ENCODE measurements at regions of chr1 and their contacts with region 1.

Region 1: GRCh38 chr1:150629115-150629928 is at the start of gene ENSA:
- DNase-seq: peak; percentile 99
- H3K4me3 ChIP-seq: peak within 1 kb of the TSS; percentile 22 to 56 (median 44)
- H3K27ac ChIP-seq: peak within 1 kb of the TSS; percentile 93 to 99 (median 95)
- H3K4me1 ChIP-seq: peaks cover 9 to 16% of the 10 kb centered on the region in 2 donors
- H3K27me3 ChIP-seq: no peaks in the 10 kb centered on the region
- CTCF ChIP-seq: no peak
- POLR2A ChIP-seq: peak; percentile 74 to 97
- total RNA-seq, gene ENSA: 183 to 292 (median 218) TPM

Region 2: DNA sequence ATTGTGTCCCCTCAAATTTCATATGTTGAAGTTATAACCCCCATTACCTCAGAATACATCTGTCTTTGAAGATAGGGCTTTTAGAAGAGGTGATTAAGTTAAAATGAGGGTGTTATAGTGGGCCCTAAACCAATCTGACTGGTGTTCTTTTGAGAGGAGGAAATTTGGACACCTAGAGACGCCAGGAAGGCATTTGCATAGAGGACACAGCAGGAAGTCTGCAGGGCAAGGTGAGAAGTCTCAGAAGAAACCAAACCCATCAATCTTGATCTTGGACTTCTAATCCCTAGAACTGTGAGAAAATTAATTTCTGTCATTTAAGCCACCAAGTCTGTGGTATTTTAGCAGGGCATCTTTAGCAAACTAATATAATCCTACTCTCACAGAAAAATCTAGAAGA is 54.6 kb after region 1 on chr1:
- intact Hi-C with region 1: loop called (anchors 10 kb)
- DNase-seq: no peak
- H3K4me3 ChIP-seq: no peak overlapping the region
- H3K27ac ChIP-seq: no peak overlapping the region
- H3K4me1 ChIP-seq: no peaks in the 10 kb centered on the region
- H3K27me3 ChIP-seq: no peaks in the 10 kb centered on the region
- CTCF ChIP-seq: no peak
- POLR2A ChIP-seq: no peak